HCT116 (cell line): ENCODE measurements at regions of chr16 and their contacts with region 1.

Region 1: DNA sequence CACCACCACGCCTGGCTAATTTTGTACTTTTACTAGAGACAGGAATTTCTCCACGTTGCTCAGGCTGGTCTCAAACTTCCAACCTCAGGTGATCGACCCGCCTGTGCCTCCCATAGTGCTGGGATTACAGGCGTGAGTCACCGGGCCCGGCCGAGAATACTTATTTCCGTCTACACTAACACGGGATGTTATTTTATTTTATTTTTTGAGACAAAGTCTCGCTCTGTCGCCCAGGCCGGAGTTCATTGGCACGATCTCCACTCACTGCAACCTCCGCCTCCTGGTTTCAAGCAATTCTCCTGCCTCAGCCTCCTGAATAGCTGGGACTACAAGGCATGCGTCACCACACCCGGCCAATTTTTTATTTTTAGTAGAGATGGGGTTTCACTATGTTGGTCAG is 9.5 kb upstream of the PDXDC1 start:
- DNase-seq: no peak
- ATAC-seq: no peak
- H3K4me3 ChIP-seq: no peak overlapping the region
- H3K27ac ChIP-seq: no peak overlapping the region
- H3K4me1 ChIP-seq: peaks cover 0 to 2% of the 10 kb centered on the region in 2 experiments; a peak in 2 of 4 replicates
- H3K27me3 ChIP-seq: no peaks in the 10 kb centered on the region
- CTCF ChIP-seq: no peak
- POLR2A ChIP-seq: no peak
- RAD21 ChIP-seq: no peak

Region 2: GRCh38 chr16:13816701-13817100 is 1148.6 kb before region 1 on chr16:
- CTCF ChIA-PET with region 1: no interaction called
- POLR2A ChIA-PET with region 1: no interaction called
- RAD21 ChIA-PET with region 1: no interaction called
- intact Hi-C with region 1: no loop called
- DNase-seq: no peak
- ATAC-seq: no peak
- H3K4me3 ChIP-seq: no peak overlapping the region
- H3K27ac ChIP-seq: no peak overlapping the region
- H3K4me1 ChIP-seq: no peaks in the 10 kb centered on the region
- H3K27me3 ChIP-seq: peaks cover 44% of the 10 kb centered on the region
- CTCF ChIP-seq: no peak
- POLR2A ChIP-seq: no peak
- RAD21 ChIP-seq: no peak

Region 3: GRCh38 chr16:15032547-15033308 is 67.4 kb after region 1 on chr16:
- CTCF ChIA-PET with region 1: no interaction called
- POLR2A ChIA-PET with region 1: no interaction called
- RAD21 ChIA-PET with region 1: no interaction called
- intact Hi-C with region 1: loop called (anchors 10 kb)
- DNase-seq: no peak
- ATAC-seq: no peak
- H3K4me3 ChIP-seq: no peak overlapping the region
- H3K27ac ChIP-seq: no peak overlapping the region
- H3K4me1 ChIP-seq: no peaks in the 10 kb centered on the region
- H3K27me3 ChIP-seq: no peaks in the 10 kb centered on the region
- CTCF ChIP-seq: no peak
- POLR2A ChIP-seq: no peak
- RAD21 ChIP-seq: no peak